Endothelial cell of umbilical vein (primary cell): ENCODE measurements at regions of chr10 and their contacts with region 1.

Region 1: DNA sequence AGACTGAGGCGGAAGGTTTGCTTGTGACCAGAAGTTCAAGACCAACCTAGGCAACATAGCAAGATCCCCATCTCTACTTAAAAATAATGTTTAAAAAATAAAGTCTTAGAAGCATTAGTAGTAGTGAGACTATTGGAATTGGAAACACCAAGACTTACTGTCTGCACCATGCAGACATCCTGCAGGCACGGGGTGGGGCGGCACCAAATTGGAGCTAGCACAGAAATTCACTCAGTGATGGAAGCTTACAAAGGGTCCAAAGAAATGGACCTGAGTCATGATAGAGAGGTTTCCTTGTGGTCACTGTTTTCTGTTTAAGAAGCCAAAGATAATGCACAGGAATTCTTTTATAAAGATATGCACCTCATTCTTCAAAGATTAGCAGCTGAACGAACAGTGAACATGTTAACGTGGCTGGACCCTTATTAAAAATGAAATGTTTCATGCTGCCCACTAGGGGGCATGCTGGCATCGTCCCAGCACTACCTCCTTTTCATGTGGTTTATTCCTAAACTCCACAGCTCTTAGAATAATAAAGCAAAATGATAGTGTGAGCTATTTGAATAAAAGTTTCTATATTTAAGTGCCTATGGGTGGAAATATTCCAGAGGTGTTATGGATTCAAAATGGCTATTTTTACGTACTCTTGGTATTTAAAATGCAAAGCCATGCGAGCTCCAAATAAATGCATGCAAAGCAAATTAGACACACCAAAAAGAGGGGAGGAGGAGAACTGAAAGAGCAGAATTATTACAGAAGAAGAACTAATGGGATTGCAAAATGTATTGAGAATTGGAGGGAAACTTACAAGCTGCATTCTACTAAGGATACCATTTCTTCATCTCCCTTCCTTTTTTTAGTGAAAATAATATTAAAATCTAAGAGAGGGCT is 28.6 kb downstream of the PDSS1 start:
- DNase-seq: peak; percentile 69
- H3K4me3 ChIP-seq: no peak overlapping the region
- H3K27ac ChIP-seq: no peak overlapping the region
- H3K4me1 ChIP-seq: no peaks in the 10 kb centered on the region
- H3K27me3 ChIP-seq: no peaks in the 10 kb centered on the region
- CTCF ChIP-seq: peak; percentile 65 to 73
- POLR2A ChIP-seq: no peak

Region 2: GRCh38 chr10:25902002-25902401 is 824.1 kb before region 1 on chr10:
- CTCF ChIA-PET with region 1: no interaction called
- POLR2A ChIA-PET with region 1: no interaction called
- dilution Hi-C with region 1: no loop called
- intact Hi-C with region 1: no loop called
- DNase-seq: no peak
- H3K4me3 ChIP-seq: no peak overlapping the region
- H3K27ac ChIP-seq: no peak overlapping the region
- H3K4me1 ChIP-seq: no peaks in the 10 kb centered on the region
- H3K27me3 ChIP-seq: no peaks in the 10 kb centered on the region
- CTCF ChIP-seq: no peak
- POLR2A ChIP-seq: no peak

Region 3: GRCh38 chr10:26503911-26504310 is 222.2 kb before region 1 on chr10:
- CTCF ChIA-PET with region 1: no interaction called
- POLR2A ChIA-PET with region 1: no interaction called
- dilution Hi-C with region 1: no loop called
- intact Hi-C with region 1: no loop called
- DNase-seq: no peak
- H3K4me3 ChIP-seq: no peak overlapping the region
- H3K27ac ChIP-seq: no peak overlapping the region
- H3K4me1 ChIP-seq: no peaks in the 10 kb centered on the region
- H3K27me3 ChIP-seq: no peaks in the 10 kb centered on the region
- CTCF ChIP-seq: no peak
- POLR2A ChIP-seq: no peak

Region 4: GRCh38 chr10:26612151-26612915 is 113.7 kb before region 1 on chr10:
- CTCF ChIA-PET with region 1: no interaction called
- POLR2A ChIA-PET with region 1: no interaction called
- dilution Hi-C with region 1: no loop called
- intact Hi-C with region 1: loop called (anchors 10 kb)
- DNase-seq: no peak
- H3K4me3 ChIP-seq: no peak overlapping the region
- H3K27ac ChIP-seq: no peak overlapping the region
- H3K4me1 ChIP-seq: no peaks in the 10 kb centered on the region
- H3K27me3 ChIP-seq: no peaks in the 10 kb centered on the region
- CTCF ChIP-seq: no peak
- POLR2A ChIP-seq: no peak

Region 5: GRCh38 chr10:26746061-26746460 is 20.0 kb after region 1 on chr10:
- CTCF ChIA-PET with region 1: interaction called, 16 read pairs
- POLR2A ChIA-PET with region 1: no interaction called
- dilution Hi-C with region 1: no loop called
- intact Hi-C with region 1: no loop called
- DNase-seq: no peak
- H3K4me3 ChIP-seq: no peak overlapping the region
- H3K27ac ChIP-seq: no peak overlapping the region
- H3K4me1 ChIP-seq: no peaks in the 10 kb centered on the region
- H3K27me3 ChIP-seq: no peaks in the 10 kb centered on the region
- CTCF ChIP-seq: no peak
- POLR2A ChIP-seq: no peak

Region 6: DNA sequence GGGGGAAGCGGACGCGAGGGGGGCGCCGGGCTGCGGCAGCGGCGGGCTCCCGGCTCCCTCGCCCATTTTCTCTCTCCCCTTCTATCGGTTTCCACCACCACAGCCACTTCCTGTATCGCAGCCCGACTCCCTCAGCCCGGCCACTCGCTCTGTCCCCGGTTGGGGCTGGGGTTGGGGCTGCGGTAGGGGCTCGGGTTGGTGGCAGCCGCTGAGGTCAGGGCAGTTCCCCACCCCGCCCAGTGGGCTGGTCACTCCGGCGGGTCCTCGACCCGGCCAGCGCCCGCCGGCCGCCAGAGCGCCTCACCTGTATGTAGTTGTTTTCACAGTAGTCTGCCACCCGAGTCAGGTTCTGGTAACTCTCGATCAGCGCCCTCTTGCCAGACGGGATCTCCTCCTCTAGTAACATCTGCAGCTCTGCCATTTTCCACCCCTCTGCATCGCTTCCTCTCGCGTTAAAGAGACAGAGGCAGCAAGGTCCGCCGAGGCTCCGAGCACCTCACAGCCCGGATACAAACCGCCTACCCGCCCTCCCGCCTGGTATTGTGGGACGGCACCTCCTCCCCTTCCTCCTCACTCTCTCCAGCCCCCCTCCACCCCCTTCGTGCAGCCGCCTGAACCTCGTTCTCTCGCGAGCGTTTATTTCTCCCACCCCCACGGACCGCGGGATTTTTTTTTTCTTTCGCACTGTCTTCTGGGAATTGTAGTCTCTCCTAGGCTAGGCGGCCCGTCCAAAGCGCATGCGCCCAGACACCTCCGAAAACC is 134.5 kb after region 1 on chr10 and contains the start of gene ABI1:
- CTCF ChIA-PET with region 1: interaction called, 39 read pairs
- POLR2A ChIA-PET with region 1: interaction called, 3 read pairs
- dilution Hi-C with region 1: no loop called
- intact Hi-C with region 1: loop called (anchors 1 kb)
- DNase-seq: peak; percentile 100
- H3K4me3 ChIP-seq: peak within 1 kb of the TSS; percentile 99
- H3K27ac ChIP-seq: peak within 1 kb of the TSS; percentile 78
- H3K4me1 ChIP-seq: peaks cover 13% of the 10 kb centered on the region
- H3K27me3 ChIP-seq: peaks cover 8 to 10% of the 10 kb centered on the region in 2 experiments
- CTCF ChIP-seq: no peak
- POLR2A ChIP-seq: peak; percentile 87
- total RNA-seq, gene ABI1: 53.6 and 58.8 TPM in 2 replicates

Region 7: GRCh38 chr10:26881600-26882331 is 155.7 kb after region 1 on chr10:
- CTCF ChIA-PET with region 1: interaction called, 295 read pairs
- POLR2A ChIA-PET with region 1: interaction called, 3 read pairs
- dilution Hi-C with region 1: no loop called
- intact Hi-C with region 1: loop called (anchors 1 kb)
- DNase-seq: peak; percentile 65
- H3K4me3 ChIP-seq: no peak overlapping the region
- H3K27ac ChIP-seq: no peak overlapping the region
- H3K4me1 ChIP-seq: no peaks in the 10 kb centered on the region
- H3K27me3 ChIP-seq: peaks cover 5 to 9% of the 10 kb centered on the region in 2 experiments
- CTCF ChIP-seq: peak; percentile 52 to 61
- POLR2A ChIP-seq: no peak

Region 8: DNA sequence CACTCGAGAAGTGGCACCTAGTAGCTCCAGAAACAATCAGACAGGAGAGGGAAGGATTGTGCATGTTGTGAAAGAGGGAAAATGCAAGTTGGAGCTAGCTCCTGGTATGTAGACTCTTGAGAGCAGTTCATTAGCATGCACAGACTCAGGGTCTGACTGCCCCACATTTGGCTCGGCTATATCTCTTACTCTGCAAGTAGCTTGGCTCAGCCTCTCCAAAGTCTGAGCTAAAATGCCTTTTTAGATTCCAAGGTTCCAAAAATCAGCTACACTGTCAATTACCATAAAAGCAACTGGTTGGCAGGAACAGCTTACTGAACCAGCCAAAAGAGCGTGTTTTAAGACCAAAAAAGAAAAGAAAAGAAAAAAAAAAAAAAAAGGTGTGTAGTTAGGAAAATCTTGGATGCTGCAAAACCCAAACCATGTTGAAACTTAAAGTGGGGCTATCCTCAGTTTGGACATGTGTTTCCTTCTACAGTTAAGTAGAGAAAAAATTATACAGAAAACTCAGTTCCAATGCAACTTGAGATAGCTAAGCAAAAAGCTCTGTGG is 954.0 kb after region 1 on chr10:
- CTCF ChIA-PET with region 1: no interaction called
- POLR2A ChIA-PET with region 1: no interaction called
- dilution Hi-C with region 1: no loop called
- intact Hi-C with region 1: no loop called
- DNase-seq: no peak
- H3K4me3 ChIP-seq: no peak overlapping the region
- H3K27ac ChIP-seq: no peak overlapping the region
- H3K4me1 ChIP-seq: no peaks in the 10 kb centered on the region
- H3K27me3 ChIP-seq: peaks cover 0 to 3% of the 10 kb centered on the region in 2 experiments
- CTCF ChIP-seq: no peak
- POLR2A ChIP-seq: no peak